Activated CD4-positive, alpha-beta T cell treated with anti-CD3 and anti-CD28 coated beads, Interleukin-2, amount 10 ng/mL, durations not matched to agents 24 days and 14 days (primary cell): ENCODE measurements at regions of chr5 and their contacts with region 1.

Region 1: GRCh38 chr5:65925601-65926275 is 637 bp upstream of the ERBIN start:
- DNase-seq: peak; percentile 93
- H3K4me3 Mint-ChIP-seq: peak overlapping the region; percentile 93
- H3K27ac Mint-ChIP-seq: peak overlapping the region; percentile 95
- H3K4me1 Mint-ChIP-seq: peaks cover 27% of the 10 kb centered on the region
- H3K27me3 Mint-ChIP-seq: peaks cover 17% of the 10 kb centered on the region

Region 2: DNA sequence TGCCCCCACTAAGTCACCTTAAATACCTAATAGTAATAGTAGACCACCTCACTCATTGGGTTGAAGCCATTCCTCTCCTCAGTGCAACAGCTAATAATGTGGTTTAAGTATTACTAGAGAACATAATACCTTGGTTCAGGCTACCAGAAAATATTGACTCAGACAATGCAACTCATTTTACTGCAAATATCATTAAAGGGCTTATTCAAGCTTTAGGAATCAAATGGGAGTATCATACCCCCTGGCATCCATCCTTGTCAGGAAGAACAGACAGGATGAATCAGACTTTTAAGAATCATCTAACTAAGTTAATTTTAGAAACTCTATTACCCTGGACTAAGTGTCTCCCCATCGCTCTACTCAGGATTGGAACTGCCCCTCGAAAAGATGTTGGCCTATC is 1766.9 kb before region 1 on chr5:
- intact Hi-C with region 1: no loop called
- DNase-seq: no peak
- H3K4me3 Mint-ChIP-seq: no peak overlapping the region
- H3K27ac Mint-ChIP-seq: no peak overlapping the region
- H3K4me1 Mint-ChIP-seq: no peaks in the 10 kb centered on the region
- H3K27me3 Mint-ChIP-seq: peaks cover 6% of the 10 kb centered on the region

Region 3: GRCh38 chr5:65624571-65625555 is 300.9 kb before region 1 on chr5 and contains the starts of genes SHLD3 and TRAPPC13:
- intact Hi-C with region 1: loop called (anchors 2 kb)
- DNase-seq: peak; percentile 95
- H3K4me3 Mint-ChIP-seq: peak within 1 kb of the TSS; percentile 91
- H3K27ac Mint-ChIP-seq: peak within 1 kb of the TSS; percentile 99
- H3K4me1 Mint-ChIP-seq: peaks cover 28% of the 10 kb centered on the region
- H3K27me3 Mint-ChIP-seq: no peaks in the 10 kb centered on the region
- total RNA-seq, gene SHLD3: 4.7 and 5.1 TPM in 2 replicates
- total RNA-seq, gene TRAPPC13: 22.4 and 27.2 TPM in 2 replicates

Region 4: GRCh38 chr5:65779643-65780042 is 146.1 kb before region 1 on chr5:
- intact Hi-C with region 1: loop called (anchors 5 kb)
- DNase-seq: peak; percentile 70
- H3K4me3 Mint-ChIP-seq: peak overlapping the region; percentile 36
- H3K27ac Mint-ChIP-seq: peak overlapping the region; percentile 65
- H3K4me1 Mint-ChIP-seq: peaks cover 19% of the 10 kb centered on the region
- H3K27me3 Mint-ChIP-seq: no peaks in the 10 kb centered on the region

Region 5: DNA sequence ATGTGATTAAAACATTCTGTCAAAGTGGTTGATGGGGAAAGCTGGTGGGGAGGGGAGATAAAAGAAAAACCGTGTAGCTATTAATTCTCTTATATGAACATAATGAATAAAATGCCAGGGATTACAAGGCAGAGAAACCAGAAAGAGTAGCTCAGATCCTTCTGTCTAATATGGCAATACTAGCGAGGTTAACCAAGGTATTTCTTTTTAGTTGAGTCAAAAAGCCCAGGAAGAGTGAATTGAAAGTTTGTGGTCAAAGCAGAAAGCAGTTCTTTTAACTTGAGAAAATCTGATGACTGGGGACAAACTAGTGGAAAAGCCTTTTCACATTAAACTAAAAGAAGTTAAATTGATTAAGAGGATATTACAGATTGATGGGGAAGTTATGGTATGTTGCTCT is 76.7 kb after region 1 on chr5:
- intact Hi-C with region 1: loop called (anchors 5 kb)
- DNase-seq: no peak
- H3K4me3 Mint-ChIP-seq: no peak overlapping the region
- H3K27ac Mint-ChIP-seq: no peak overlapping the region
- H3K4me1 Mint-ChIP-seq: peaks cover 14% of the 10 kb centered on the region
- H3K27me3 Mint-ChIP-seq: no peaks in the 10 kb centered on the region

Region 6: GRCh38 chr5:66171349-66172344 is 245.9 kb after region 1 on chr5:
- intact Hi-C with region 1: loop called (anchors 2 kb)
- DNase-seq: peak; percentile 84
- H3K4me3 Mint-ChIP-seq: no peak overlapping the region
- H3K27ac Mint-ChIP-seq: no peak overlapping the region
- H3K4me1 Mint-ChIP-seq: peaks cover 13% of the 10 kb centered on the region
- H3K27me3 Mint-ChIP-seq: no peaks in the 10 kb centered on the region

Region 7: DNA sequence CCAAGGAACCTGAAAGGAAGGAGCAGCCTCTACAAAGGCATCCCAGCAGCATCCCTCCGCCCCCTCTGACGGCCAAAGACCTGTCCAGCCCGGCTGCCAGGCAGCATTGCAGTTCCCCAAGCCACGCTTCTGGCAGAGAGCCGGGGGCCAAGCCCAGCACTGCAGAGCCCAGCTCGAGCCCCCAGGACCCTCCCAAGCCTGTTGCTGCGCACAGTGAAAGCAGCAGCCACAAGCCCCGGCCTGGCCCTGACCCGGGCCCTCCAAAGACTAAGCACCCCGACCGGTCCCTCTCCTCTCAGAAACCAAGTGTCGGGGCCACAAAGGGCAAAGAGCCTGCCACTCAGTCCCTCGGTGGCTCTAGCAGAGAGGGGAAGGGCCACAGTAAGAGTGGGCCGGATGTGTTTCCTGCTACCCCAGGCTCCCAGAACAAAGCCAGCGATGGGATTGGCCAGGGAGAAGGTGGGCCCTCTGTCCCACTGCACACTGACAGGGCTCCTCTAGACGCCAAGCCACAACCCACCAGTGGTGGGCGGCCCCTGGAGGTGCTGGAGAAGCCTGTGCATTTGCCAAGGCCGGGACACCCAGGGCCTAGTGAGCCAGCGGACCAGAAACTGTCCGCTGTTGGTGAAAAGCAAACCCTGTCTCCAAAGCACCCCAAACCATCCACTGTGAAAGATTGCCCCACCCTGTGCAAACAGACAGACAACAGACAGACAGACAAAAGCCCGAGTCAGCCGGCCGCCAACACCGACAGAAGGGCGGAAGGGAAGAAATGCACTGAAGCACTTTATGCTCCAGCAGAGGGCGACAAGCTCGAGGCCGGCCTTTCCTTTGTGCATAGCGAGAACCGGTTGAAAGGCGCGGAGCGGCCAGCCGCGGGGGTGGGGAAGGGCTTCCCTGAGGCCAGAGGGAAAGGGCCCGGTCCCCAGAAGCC is 1240.1 kb after region 1 on chr5:
- intact Hi-C with region 1: loop called (anchors 5 kb)
- DNase-seq: peak; percentile 96
- H3K4me3 Mint-ChIP-seq: peak overlapping the region; percentile 89
- H3K27ac Mint-ChIP-seq: peak overlapping the region; percentile 96
- H3K4me1 Mint-ChIP-seq: peaks cover 65% of the 10 kb centered on the region
- H3K27me3 Mint-ChIP-seq: no peaks in the 10 kb centered on the region